Panc1 (cell line): ENCODE measurements at regions of chr10 and their contacts with region 1.

Region 1: DNA sequence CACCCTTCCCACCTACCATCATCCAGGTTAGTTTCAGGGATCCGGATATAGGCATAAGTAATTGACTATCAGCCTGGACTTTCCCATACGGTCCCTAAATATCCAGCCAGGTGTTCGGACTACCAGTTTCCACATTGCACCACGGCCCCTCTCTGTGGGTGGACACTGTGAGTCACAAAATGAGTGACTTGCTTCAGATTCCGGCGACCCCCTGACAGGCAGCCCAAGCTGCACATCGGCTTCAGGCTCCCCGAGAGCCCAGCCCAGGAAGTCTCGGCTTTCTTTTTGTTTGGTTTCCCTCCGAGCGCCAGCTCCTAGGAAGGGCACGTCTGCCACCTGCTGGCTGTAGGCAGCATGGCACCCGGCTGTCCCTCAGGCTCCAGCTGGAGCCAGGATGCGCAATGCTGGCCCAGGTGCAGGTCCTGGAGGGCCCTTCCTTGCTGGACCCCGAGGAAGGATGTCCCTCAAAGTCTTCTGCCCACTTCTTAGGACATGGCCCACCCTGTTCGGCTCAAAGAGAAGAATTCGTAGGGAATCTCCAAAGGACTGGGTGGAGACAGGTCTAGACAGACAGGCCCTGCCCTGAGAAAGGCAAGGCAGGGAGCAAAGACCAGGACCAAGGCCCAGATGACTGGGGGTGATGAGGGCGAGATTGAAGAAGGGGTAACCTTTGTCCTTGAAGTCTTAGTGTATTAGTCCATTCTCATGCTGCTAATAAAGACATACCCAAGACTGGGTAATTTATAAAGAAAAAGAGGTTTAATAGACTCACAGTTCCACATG is 10.6 kb downstream of the HABP2 start:
- DNase-seq: peak; percentile 43
- ATAC-seq: peak; percentile 97
- H3K4me3 ChIP-seq: peak overlapping the region; percentile 28 to 49
- H3K27ac ChIP-seq: no peak overlapping the region
- H3K4me1 ChIP-seq: 0 out of 2 replicates have a peak, but pooled peaks cover 2% of the 10 kb centered on the region
- H3K27me3 ChIP-seq: 0 out of 2 replicates have a peak, but pooled peaks cover 2% of the 10 kb centered on the region
- CTCF ChIP-seq: peak; percentile 99

Region 2: DNA sequence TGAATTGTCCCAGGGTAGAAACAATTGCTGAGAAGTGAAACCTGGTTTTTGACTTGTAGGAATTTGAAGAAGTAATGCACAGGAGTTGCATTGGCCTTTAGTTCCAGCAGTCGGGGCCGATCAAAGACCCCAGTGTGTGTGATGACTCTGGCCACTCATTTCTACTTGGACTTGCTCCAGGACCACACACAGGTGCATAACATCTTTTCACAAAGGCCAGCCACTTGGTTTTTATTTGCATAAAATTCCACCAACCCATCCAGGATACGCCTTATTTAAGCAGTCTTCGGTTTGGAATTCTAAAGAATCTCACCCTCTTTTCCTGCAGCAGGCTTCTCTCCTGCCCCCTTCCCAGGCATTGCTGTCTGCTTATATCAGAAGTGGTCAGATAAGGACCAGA is 172.6 kb before region 1 on chr10:
- CTCF ChIA-PET with region 1: no interaction called
- POLR2A ChIA-PET with region 1: no interaction called
- in situ Hi-C with region 1: no loop called
- intact Hi-C with region 1: loop called (anchors 5 kb)
- DNase-seq: no peak
- ATAC-seq: no peak
- H3K4me3 ChIP-seq: no peak overlapping the region
- H3K27ac ChIP-seq: no peak overlapping the region
- H3K4me1 ChIP-seq: no peaks in the 10 kb centered on the region; the same call in 1 of the 2 replicates
- H3K27me3 ChIP-seq: peaks cover 18% of the 10 kb centered on the region
- CTCF ChIP-seq: no peak

Region 3: DNA sequence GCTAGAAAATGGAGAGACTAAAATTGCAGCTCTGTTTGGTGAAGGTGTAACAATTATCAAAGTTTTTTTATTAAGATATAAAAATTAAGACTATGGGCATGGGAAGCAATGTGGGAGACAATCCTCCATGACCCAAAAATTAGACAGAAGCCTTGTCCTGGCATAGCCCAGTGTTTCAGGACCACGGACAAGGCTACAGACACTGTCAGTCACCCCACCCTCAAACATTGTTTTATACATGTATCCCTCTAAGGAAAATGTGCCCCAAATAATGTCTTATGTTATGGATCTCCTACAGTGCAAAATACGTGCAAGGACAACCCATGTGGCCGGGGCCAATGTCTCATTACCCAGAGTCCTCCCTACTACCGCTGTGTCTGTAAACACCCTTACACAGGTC is 13.4 kb after region 1 on chr10:
- CTCF ChIA-PET with region 1: no interaction called
- POLR2A ChIA-PET with region 1: no interaction called
- in situ Hi-C with region 1: no loop called
- intact Hi-C with region 1: no loop called
- DNase-seq: no peak
- ATAC-seq: no peak
- H3K4me3 ChIP-seq: no peak overlapping the region
- H3K27ac ChIP-seq: no peak overlapping the region
- H3K4me1 ChIP-seq: no peaks in the 10 kb centered on the region
- H3K27me3 ChIP-seq: peaks cover 29% of the 10 kb centered on the region
- CTCF ChIP-seq: no peak

Region 4: GRCh38 chr10:113610631-113611585 is 47.4 kb after region 1 on chr10:
- CTCF ChIA-PET with region 1: no interaction called
- POLR2A ChIA-PET with region 1: interaction called, 16 read pairs
- in situ Hi-C with region 1: no loop called
- intact Hi-C with region 1: no loop called
- DNase-seq: no peak
- ATAC-seq: peak; percentile 46; the same call in 1 of the 2 replicates
- H3K4me3 ChIP-seq: no peak overlapping the region
- H3K27ac ChIP-seq: no peak overlapping the region
- H3K4me1 ChIP-seq: no peaks in the 10 kb centered on the region
- H3K27me3 ChIP-seq: peaks cover 4% of the 10 kb centered on the region; the same call in 1 of the 2 replicates
- CTCF ChIP-seq: peak; percentile 26